Heart right ventricle (tissue), 16 donors: ENCODE measurements at regions of chr6 and their contacts with region 1.

Region 1: GRCh38 chr6:76682842-76683241 is 610.4 kb upstream of the IMPG1 start:
- DNase-seq: no peak
- ATAC-seq: no peak
- H3K4me3 ChIP-seq: no peak overlapping the region
- H3K27ac ChIP-seq: no peak overlapping the region
- H3K4me1 ChIP-seq: no peaks in the 10 kb centered on the region
- H3K27me3 ChIP-seq: no peaks in the 10 kb centered on the region
- CTCF ChIP-seq: peak in 8 of 9 donors; percentile 14 to 55 (median 41)

Region 2: GRCh38 chr6:76774781-76775384 is 92.0 kb after region 1 on chr6:
- intact Hi-C with region 1: no loop called
- DNase-seq: peak in 1 of 2 donors; percentile 34
- ATAC-seq: peak in 7 of 8 donors; percentile 67 to 86 (median 80)
- H3K4me3 ChIP-seq: peak overlapping the region in 4 of 10 donors; percentile 4 to 20 (median 12)
- H3K27ac ChIP-seq: no peak overlapping the region
- H3K4me1 ChIP-seq: peaks cover 0 to 20% (median 5%) of the 10 kb centered on the region in 9 donors
- H3K27me3 ChIP-seq: no peaks in the 10 kb centered on the region
- CTCF ChIP-seq: no peak

Region 3: GRCh38 chr6:76861403-76861802 is 178.6 kb after region 1 on chr6:
- intact Hi-C with region 1: loop called in 3 of 10 experiments (anchors 5 to 10 kb)
- DNase-seq: no peak
- ATAC-seq: no peak
- H3K4me3 ChIP-seq: no peak overlapping the region
- H3K27ac ChIP-seq: no peak overlapping the region
- H3K4me1 ChIP-seq: peaks cover 0 to 8% (median 0%) of the 10 kb centered on the region in 9 donors
- H3K27me3 ChIP-seq: no peaks in the 10 kb centered on the region
- CTCF ChIP-seq: peak in 7 of 9 donors; percentile 8 to 44 (median 21)

Region 4: DNA sequence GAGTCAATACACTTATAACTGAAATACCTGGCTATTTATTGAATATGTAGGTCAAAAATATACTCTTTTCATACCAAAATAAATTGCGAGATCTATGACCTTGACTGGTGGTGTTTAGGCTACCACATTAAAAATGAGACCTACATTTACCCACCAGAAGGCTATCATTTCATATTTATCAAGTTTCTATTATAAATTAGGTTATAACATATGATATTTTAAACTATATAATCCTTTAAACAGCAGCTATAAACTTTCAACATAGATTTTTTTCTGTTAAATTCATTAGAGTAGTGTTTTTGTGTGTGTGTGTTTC is 194.4 kb after region 1 on chr6:
- intact Hi-C with region 1: loop called in 2 of 10 experiments (anchors 10 kb)
- DNase-seq: no peak
- ATAC-seq: no peak
- H3K4me3 ChIP-seq: no peak overlapping the region
- H3K27ac ChIP-seq: no peak overlapping the region
- H3K4me1 ChIP-seq: no peaks in the 10 kb centered on the region
- H3K27me3 ChIP-seq: no peaks in the 10 kb centered on the region
- CTCF ChIP-seq: no peak